Ovary (tissue), 10 donors: ENCODE measurements at regions of chr12 and their contacts with region 1.

Region 1: GRCh38 chr12:106386813-106387535 is 29.4 kb downstream of the POLR3B start:
- DNase-seq: no peak
- H3K4me3 ChIP-seq: no peak overlapping the region
- H3K27ac ChIP-seq: no peak overlapping the region
- H3K4me1 ChIP-seq: no peaks in the 10 kb centered on the region
- H3K27me3 ChIP-seq: no peaks in the 10 kb centered on the region
- CTCF ChIP-seq: no peak
- EP300 ChIP-seq: no peak
- POLR2A ChIP-seq: no peak

Region 2: DNA sequence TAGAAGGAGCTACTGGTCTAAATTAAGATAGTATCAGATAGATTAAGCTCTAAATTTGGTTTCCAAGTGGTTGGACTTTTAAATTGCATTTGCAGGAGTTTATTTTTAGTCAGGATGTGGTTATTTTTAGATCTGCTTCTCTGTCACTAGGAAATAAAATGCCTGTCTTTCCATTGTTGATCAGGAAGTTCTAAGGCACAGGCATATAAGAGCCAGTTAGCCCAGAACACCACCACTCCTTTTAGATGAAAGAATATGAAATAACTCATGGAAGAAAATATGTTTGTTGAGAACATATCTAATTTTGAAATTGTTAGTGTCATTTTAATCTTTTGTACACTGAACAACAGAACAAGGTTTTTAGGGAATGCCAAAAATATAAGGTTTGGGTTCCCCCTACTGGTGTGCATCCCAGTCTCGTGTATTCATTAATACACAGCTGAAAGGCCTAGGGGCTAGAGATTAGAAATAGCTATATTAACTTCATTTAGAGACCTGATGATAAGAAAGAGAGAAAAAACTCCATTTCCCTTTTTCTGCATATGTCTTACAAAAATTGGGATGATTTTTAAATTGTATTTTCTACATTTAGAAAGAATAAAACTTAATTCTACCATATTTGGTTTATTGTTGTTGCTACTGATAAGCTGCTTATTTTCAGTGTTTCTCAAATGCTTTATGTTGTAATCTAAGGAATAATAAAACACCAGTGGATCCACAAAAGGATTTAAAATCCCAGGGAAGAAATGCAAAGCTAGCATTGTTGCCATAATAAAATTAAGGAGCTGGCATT is 454.7 kb after region 1 on chr12:
- intact Hi-C with region 1: loop called in 3 of 4 experiments (anchors 5 to 10 kb)
- DNase-seq: peak in 4 of 5 donors; percentile 13 to 61 (median 30)
- H3K4me3 ChIP-seq: no peak overlapping the region
- H3K27ac ChIP-seq: no peak overlapping the region
- H3K4me1 ChIP-seq: peaks cover 4% of the 10 kb centered on the region
- H3K27me3 ChIP-seq: no peaks in the 10 kb centered on the region
- CTCF ChIP-seq: peak; percentile 23 to 65 (median 62)
- EP300 ChIP-seq: no peak
- POLR2A ChIP-seq: no peak

Region 3: GRCh38 chr12:106919910-106920544 is 533.1 kb after region 1 on chr12:
- intact Hi-C with region 1: loop called in 3 of 4 experiments (anchors 2 to 10 kb)
- DNase-seq: peak in 1 of 5 donors; percentile 24
- H3K4me3 ChIP-seq: no peak overlapping the region
- H3K27ac ChIP-seq: no peak overlapping the region
- H3K4me1 ChIP-seq: no peaks in the 10 kb centered on the region
- H3K27me3 ChIP-seq: no peaks in the 10 kb centered on the region
- CTCF ChIP-seq: peak; percentile 61 to 81 (median 79)
- EP300 ChIP-seq: no peak
- POLR2A ChIP-seq: no peak